ENCODE measurements at regions of chr19 and their contacts with region 1.

Region 1: GRCh38 chr19:41795031-41795461 is 1.3 kb upstream of the CEACAM3 start:
- DNase-seq: peak; percentile 27

Region 2: GRCh38 chr19:41606215-41606837 is 188.7 kb before region 1 on chr19:
- CTCF ChIA-PET with region 1: no interaction called
- POLR2A ChIA-PET with region 1: no interaction called
- DNase-seq: no peak

Region 3: DNA sequence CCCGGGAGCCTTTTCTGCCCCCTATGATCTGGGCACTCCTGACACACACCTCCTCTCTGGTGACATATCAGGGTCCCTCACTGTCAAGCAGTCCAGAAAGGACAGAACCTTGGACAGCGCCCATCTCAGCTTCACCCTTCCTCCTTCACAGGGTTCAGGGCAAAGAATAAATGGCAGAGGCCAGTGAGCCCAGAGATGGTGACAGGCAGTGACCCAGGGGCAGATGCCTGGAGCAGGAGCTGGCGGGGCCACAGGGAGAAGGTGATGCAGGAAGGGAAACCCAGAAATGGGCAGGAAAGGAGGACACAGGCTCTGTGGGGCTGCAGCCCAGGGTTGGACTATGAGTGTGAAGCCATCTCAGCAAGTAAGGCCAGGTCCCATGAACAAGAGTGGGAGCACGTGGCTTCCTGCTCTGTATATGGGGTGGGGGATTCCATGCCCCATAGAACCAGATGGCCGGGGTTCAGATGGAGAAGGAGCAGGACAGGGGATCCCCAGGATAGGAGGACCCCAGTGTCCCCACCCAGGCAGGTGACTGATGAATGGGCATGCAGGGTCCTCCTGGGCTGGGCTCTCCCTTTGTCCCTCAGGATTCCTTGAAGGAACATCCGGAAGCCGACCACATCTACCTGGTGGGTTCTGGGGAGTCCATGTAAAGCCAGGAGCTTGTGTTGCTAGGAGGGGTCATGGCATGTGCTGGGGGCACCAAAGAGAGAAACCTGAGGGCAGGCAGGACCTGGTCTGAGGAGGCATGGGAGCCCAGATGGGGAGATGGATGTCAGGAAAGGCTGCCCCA is 98.4 kb before region 1 on chr19:
- CTCF ChIA-PET with region 1: no interaction called
- POLR2A ChIA-PET with region 1: no interaction called
- DNase-seq: no peak

Region 4: DNA sequence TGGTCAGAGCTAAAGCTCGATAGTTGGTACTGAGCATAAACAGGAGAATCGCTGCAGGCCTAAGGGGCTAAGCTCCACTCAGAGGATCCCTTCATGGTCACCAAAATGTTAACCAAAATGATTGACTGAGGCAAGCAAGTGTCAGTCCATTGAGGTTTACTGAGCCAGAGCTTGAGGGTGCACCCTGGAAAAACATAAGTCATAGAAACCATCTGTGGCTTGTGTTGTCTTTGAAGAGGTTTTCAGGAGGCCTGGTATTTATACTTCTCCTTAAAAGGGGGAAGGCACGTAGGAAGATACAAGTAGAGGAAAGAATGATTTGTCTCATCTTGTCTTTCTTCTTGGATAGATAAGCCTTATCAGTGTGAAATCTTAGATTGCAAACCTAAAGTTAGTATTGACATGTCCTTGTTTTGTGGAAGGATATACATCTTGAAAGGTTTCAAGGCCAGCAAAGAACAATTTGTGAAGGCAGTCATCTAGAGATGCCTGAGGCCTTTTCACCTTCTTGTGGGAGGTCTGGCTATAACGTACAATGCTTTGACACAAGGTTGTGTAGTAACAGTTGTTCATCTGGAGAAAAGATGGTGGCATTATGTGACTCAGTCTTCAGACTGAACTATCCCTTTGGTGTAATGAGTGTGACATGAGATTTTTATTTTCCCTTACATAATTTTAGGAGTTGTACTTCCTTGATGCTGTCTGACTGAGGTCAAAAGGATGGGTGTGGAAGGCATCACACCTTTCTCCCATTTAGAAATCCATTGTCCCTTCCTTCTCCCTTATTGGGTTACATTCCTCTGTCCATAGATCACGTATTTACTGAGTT is 54.4 kb before region 1 on chr19:
- CTCF ChIA-PET with region 1: no interaction called
- POLR2A ChIA-PET with region 1: no interaction called
- DNase-seq: no peak

Region 5: DNA sequence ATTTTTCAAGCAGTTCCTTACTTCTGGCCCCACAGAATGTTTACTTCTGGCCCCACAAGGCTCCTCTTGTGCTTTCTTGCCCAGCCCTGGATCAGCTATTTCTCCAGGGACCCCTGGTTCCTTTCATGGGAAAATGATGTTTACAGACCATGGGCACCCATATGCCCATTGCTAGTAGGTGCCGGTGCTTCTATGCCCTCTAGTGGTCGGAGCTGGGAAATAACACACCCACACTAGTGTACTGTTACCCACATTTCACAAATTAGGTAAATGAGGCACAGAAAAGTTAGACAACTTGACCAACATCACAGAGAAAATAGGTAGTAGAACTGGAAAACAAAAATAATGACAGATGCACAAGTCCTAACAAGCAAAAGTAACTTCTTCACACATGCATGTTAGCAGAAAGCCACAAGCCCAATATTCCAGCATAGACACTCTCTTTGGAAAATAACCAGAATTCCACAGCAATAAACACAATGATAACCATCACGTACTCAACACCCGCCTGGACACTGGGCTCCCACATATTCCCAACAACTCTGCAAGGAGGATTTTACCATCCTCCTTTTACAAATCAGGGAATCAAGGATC is 41.0 kb before region 1 on chr19:
- CTCF ChIA-PET with region 1: interaction called, 12 read pairs
- POLR2A ChIA-PET with region 1: no interaction called
- DNase-seq: peak; percentile 30